ENCODE measurements at regions of chr12 and their contacts with region 1.

Region 1: GRCh38 chr12:107317751-107318613 is 224.6 kb upstream of the CRY1 start:
- DNase-seq: peak; percentile 86
- H3K4me3 Mint-ChIP-seq: peak overlapping the region; percentile 85
- H3K27ac Mint-ChIP-seq: peak overlapping the region; percentile 30
- H3K4me1 Mint-ChIP-seq: peaks cover 32% of the 10 kb centered on the region
- H3K27me3 Mint-ChIP-seq: peaks cover 19% of the 10 kb centered on the region

Region 2: GRCh38 chr12:106955377-106956047 is 362.5 kb before region 1 on chr12 and contains the start of gene TMEM263:
- intact Hi-C with region 1: loop called (anchors 2 kb)
- DNase-seq: peak; percentile 90
- H3K4me3 Mint-ChIP-seq: peak within 1 kb of the TSS; percentile 97
- H3K27ac Mint-ChIP-seq: peak within 1 kb of the TSS; percentile 94
- H3K4me1 Mint-ChIP-seq: peaks cover 21% of the 10 kb centered on the region
- H3K27me3 Mint-ChIP-seq: peaks cover 3% of the 10 kb centered on the region
- total RNA-seq, gene TMEM263: 25.5 and 25.9 TPM in 2 replicates

Region 3: GRCh38 chr12:107287436-107288413 is 30.3 kb before region 1 on chr12:
- intact Hi-C with region 1: loop called (anchors 1 kb)
- DNase-seq: peak; percentile 42
- H3K4me3 Mint-ChIP-seq: peak overlapping the region; percentile 44
- H3K27ac Mint-ChIP-seq: peak overlapping the region; percentile 82
- H3K4me1 Mint-ChIP-seq: peaks cover 12% of the 10 kb centered on the region
- H3K27me3 Mint-ChIP-seq: peaks cover 3% of the 10 kb centered on the region

Region 4: GRCh38 chr12:107356266-107356936 is 38.4 kb after region 1 on chr12:
- intact Hi-C with region 1: loop called (anchors 1 kb)
- DNase-seq: no peak
- H3K4me3 Mint-ChIP-seq: peak overlapping the region; percentile 19
- H3K27ac Mint-ChIP-seq: no peak overlapping the region
- H3K4me1 Mint-ChIP-seq: peaks cover 74% of the 10 kb centered on the region
- H3K27me3 Mint-ChIP-seq: peaks cover 2% of the 10 kb centered on the region

Region 5: DNA sequence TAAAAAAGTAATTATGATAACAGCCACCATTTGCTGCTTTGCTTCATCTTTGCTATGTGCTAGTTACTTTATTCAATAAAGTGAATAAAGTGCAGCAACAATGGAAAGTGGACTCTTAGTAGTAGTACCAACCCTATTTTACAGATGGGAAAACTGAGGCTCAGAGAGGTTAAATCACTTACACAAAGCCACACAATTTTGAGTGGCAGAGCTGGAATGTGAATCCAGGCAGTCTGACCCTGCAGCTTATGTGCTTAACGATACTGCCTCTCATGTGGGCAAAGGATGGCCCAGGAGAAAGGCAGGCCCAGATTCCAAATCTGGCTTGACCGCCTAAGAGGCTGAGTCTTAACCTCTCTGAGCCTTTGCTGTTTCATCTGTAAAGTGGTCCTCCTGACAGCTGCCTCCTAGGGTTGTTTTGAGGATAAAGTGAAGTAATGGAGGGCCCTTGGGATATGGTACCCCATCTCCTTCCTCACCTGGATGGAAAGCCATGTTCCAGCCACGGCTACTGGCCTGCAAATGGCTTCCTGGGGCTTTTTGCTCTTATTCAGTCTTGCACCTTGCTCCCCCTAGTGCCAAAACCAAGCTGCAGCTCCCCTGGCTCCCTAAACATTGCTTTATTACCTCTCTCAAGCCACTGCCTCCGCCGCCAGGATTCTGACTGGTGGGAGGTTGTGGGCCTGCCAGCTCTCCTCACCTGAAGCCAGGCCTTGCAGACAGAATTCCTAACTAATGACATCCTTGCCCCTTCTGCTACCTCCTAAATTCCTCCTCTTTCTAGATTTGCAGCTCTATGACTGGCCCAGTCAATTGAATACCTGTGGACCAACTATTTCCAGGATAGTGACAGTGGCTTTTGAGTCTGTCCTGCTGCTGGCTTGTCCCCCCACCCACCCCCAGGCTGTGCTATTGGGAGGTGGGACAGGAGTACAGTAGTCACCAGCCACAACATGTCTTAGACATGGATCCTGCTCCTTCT is 84.3 kb after region 1 on chr12:
- intact Hi-C with region 1: loop called (anchors 1 kb)
- DNase-seq: peak; percentile 52
- H3K4me3 Mint-ChIP-seq: no peak overlapping the region
- H3K27ac Mint-ChIP-seq: no peak overlapping the region
- H3K4me1 Mint-ChIP-seq: peaks cover 41% of the 10 kb centered on the region
- H3K27me3 Mint-ChIP-seq: no peaks in the 10 kb centered on the region

Region 6: GRCh38 chr12:107685360-107686248 is 367.6 kb after region 1 on chr12 and contains the start of gene PWP1:
- intact Hi-C with region 1: loop called (anchors 5 kb)
- DNase-seq: peak; percentile 95
- H3K4me3 Mint-ChIP-seq: peak within 1 kb of the TSS; percentile 96
- H3K27ac Mint-ChIP-seq: peak within 1 kb of the TSS; percentile 97
- H3K4me1 Mint-ChIP-seq: peaks cover 36% of the 10 kb centered on the region
- H3K27me3 Mint-ChIP-seq: no peaks in the 10 kb centered on the region
- total RNA-seq, gene PWP1: 54.4 and 57.1 TPM in 2 replicates

Measured in activated T-helper 1 cell treated with anti-CD3 and anti-CD28 coated beads, Interleukin-12 subunit alpha, Interleukin-12 subunit beta, Interleukin-2, Interleukin-4 antibody, amounts not matched to agents 30 ng/mL and 10 ng/mL and 1 ng/mL, durations not matched to agents 14 hours and 24 hours and 36 hours (primary cell).